Left colon (tissue), 2 donors: ENCODE measurements at regions of chr5 and their contacts with region 1.

Region 1: DNA sequence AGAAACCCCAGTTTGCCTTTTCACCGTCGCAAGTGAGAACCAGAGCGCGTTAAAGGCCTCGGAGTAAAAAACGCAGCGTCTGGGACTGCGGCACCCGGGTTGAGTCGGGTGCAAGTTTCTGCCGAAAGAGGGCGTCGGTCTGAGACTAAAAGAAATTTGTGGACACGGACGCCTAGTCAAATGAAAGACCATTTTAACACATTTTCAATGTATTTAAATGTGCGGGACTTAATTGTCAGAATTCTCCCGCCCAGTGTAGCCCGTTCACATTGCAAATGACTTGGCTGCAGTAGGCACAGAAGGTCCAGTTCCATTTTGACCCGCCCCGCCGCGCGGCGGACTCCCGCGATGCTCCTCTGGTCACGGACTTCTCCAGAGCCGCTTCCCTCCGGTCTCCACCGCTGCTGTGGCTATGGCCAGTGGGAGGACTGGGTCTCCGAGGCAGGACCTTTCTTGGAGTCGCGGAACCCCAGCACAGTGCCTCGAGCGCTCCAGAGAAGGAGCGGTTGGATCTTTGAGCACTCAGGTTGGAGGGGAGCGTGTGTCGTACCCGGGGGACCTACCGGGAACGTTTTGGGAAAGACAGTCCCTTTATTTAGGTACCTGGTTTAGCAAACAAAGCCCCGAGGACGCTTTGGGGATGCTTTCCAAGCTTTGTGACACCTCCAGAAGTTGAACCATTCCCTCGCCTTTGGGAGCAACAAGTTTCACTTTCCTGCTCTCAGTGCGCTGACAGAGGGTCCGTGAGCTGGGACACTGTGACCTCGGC is 1.2 kb upstream of the NPR3 start:
- DNase-seq: peak; percentile 57 to 76
- ATAC-seq: peak; percentile 73

Region 2: DNA sequence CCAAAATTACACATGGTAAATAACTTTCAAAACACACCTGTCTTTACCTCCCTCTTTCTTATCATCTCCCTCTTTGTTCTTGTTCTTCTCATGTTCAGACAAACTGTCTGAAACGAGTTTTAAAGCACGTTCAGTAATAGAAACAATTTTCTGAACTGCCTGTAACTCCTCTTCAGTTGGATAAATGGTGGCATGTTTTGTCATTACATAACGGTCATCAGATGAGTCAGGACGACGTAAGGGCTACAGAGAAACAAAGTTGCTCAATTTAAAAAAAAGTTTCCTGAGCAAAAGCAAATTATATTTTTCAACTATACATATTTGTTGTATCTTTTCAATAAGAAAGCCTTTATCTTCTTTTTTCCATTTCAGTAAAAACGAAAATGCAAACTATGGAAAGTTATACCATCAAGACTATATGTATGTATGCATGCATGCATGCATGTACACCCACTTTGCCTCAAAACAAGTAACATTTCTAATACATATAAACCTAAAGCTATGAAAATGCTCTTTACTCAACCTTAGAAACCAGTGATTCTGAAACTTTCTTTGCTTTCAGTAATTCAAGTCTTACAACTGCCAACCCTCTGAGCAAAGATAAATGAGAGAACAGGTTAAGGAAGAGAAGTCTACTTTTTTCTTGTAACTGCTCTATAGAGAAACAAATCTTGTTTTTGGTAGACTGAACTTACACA is 321.4 kb before region 1 on chr5:
- intact Hi-C with region 1: no loop called
- DNase-seq: no peak
- ATAC-seq: no peak

Region 3: GRCh38 chr5:33180900-33181299 is 470.9 kb after region 1 on chr5:
- intact Hi-C with region 1: loop called in 1 of 2 experiments (anchors 5 kb)
- DNase-seq: no peak
- ATAC-seq: no peak